ENCODE measurements at regions of chr2 and their contacts with region 1.

Region 1: GRCh38 chr2:206031162-206031784 is 54.7 kb downstream of the INO80D start:
- DNase-seq: peak; percentile 43
- H3K4me3 Mint-ChIP-seq: peak overlapping the region; percentile 82
- H3K27ac Mint-ChIP-seq: peak overlapping the region; percentile 95
- H3K4me1 Mint-ChIP-seq: peaks cover 44% of the 10 kb centered on the region
- H3K27me3 Mint-ChIP-seq: no peaks in the 10 kb centered on the region
- CTCF ChIP-seq: no peak

Region 2: GRCh38 chr2:206085742-206086445 is 54.6 kb after region 1 on chr2 and contains the start of gene INO80D:
- CTCF ChIA-PET with region 1: no interaction called
- intact Hi-C with region 1: loop called (anchors 5 kb)
- DNase-seq: peak; percentile 74
- H3K4me3 Mint-ChIP-seq: peak within 1 kb of the TSS; percentile 93
- H3K27ac Mint-ChIP-seq: peak within 1 kb of the TSS; percentile 98
- H3K4me1 Mint-ChIP-seq: peaks cover 22% of the 10 kb centered on the region
- H3K27me3 Mint-ChIP-seq: no peaks in the 10 kb centered on the region
- CTCF ChIP-seq: peak; percentile 53
- total RNA-seq, gene INO80D: 19.5 and 20.2 TPM in 2 replicates

Measured in Calu3 (cell line).